Colonic mucosa (tissue), 4 donors: ENCODE measurements at regions of chr6 and their contacts with region 1.

Region 1: GRCh38 chr6:52598123-52598823 is 21.4 kb upstream of the TRAM2 start:
- DNase-seq: peak; percentile 52
- H3K4me3 ChIP-seq: no peak overlapping the region
- H3K27ac ChIP-seq: no peak overlapping the region
- H3K4me1 ChIP-seq: peaks cover 3% of the 10 kb centered on the region
- H3K27me3 ChIP-seq: no peaks in the 10 kb centered on the region
- CTCF ChIP-seq: peak; percentile 36

Region 2: GRCh38 chr6:52419809-52420670 is 178.2 kb before region 1 on chr6 and contains the start of gene EFHC1:
- intact Hi-C with region 1: loop called (anchors 2 kb)
- DNase-seq: peak; percentile 99
- H3K4me3 ChIP-seq: peak within 1 kb of the TSS; percentile 79
- H3K27ac ChIP-seq: peak within 1 kb of the TSS; percentile 47
- H3K4me1 ChIP-seq: peaks cover 5% of the 10 kb centered on the region
- H3K27me3 ChIP-seq: no peaks in the 10 kb centered on the region
- CTCF ChIP-seq: no peak
- total RNA-seq, gene EFHC1: 6.2 to 9.5 TPM

Region 3: GRCh38 chr6:52640170-52640569 is 41.9 kb after region 1 on chr6:
- intact Hi-C with region 1: no loop called
- DNase-seq: peak; percentile 25
- H3K4me3 ChIP-seq: no peak overlapping the region
- H3K27ac ChIP-seq: no peak overlapping the region
- H3K4me1 ChIP-seq: no peaks in the 10 kb centered on the region
- H3K27me3 ChIP-seq: no peaks in the 10 kb centered on the region
- CTCF ChIP-seq: no peak

Region 4: GRCh38 chr6:52650941-52651340 is 52.7 kb after region 1 on chr6:
- intact Hi-C with region 1: loop called (anchors 10 kb)
- DNase-seq: no peak
- H3K4me3 ChIP-seq: no peak overlapping the region
- H3K27ac ChIP-seq: no peak overlapping the region
- H3K4me1 ChIP-seq: no peaks in the 10 kb centered on the region
- H3K27me3 ChIP-seq: no peaks in the 10 kb centered on the region
- CTCF ChIP-seq: no peak

Region 5: GRCh38 chr6:52858416-52858815 is 260.1 kb after region 1 on chr6:
- intact Hi-C with region 1: no loop called
- DNase-seq: no peak
- H3K4me3 ChIP-seq: no peak overlapping the region
- H3K27ac ChIP-seq: no peak overlapping the region
- H3K4me1 ChIP-seq: no peaks in the 10 kb centered on the region
- H3K27me3 ChIP-seq: no peaks in the 10 kb centered on the region
- CTCF ChIP-seq: no peak